Activated naive CD8-positive, alpha-beta T cell treated with anti-CD3 and anti-CD28 coated beads, Interleukin-2, amount 10 ng/mL, durations not matched to agents 7 days and 5 days (primary cell): ENCODE measurements at regions of chr6 and their contacts with region 1.

Region 1: DNA sequence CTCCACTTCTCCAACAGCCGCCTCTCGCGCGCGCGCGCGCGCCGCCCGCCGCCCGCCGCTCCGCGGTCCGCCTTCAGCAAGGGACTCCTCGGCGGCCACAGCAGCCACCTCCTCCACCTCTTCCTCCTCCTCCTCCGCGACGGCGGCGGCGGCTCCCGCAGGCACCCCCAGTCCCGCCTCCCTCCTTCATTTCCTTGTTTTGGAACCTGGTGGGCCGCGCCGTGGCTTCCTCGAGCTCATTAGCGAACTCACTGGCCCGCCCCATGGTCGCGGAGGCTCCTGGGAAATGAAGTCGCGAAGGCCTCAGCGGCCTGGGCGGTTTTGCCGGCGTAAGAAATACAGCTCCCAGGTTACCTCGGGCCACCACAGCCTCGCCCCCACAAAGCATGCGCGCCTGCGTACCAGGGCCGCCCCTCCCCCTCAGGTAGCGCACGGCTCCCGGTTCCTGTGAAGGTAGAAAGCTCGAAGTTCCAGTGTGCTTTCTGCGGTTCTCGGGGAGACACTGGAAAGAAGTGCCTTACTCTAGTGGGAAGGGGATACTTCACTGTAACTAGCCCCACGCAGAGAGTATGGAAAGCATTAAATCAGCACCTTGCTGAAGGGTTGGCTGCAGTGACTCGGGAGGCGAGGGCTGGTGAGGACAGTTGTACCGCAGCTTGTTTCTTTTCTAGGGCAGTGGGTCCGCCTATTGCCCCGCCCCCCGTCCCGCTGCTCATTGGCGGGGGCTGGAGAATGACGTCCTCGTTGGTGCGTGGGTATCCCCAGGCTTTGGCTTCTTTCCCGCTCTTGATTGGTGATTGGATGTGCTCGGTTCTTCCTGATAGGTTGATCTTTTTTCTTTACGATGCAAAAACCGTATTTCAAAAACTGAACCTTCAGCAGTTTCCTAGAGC is at the start of gene CDK19:
- DNase-seq: peak; percentile 96
- ATAC-seq: peak; percentile 84
- H3K4me3 Mint-ChIP-seq: peak within 1 kb of the TSS; percentile 100
- H3K27ac Mint-ChIP-seq: peak within 1 kb of the TSS; percentile 100
- H3K4me1 Mint-ChIP-seq: peaks cover 32% of the 10 kb centered on the region
- H3K27me3 Mint-ChIP-seq: no peaks in the 10 kb centered on the region
- total RNA-seq, gene CDK19: 25.3 to 30.0 TPM

Region 2: GRCh38 chr6:110682460-110682853 is 133.0 kb before region 1 on chr6:
- POLR2A ChIA-PET with region 1: interaction called, 23 read pairs
- DNase-seq: no peak
- ATAC-seq: peak; percentile 99
- H3K4me3 Mint-ChIP-seq: no peak overlapping the region
- H3K27ac Mint-ChIP-seq: peak overlapping the region; percentile 27
- H3K4me1 Mint-ChIP-seq: peaks cover 9% of the 10 kb centered on the region
- H3K27me3 Mint-ChIP-seq: no peaks in the 10 kb centered on the region

Region 3: GRCh38 chr6:110826236-110827129 is 11.0 kb after region 1 on chr6:
- POLR2A ChIA-PET with region 1: interaction called, 13 read pairs
- DNase-seq: no peak
- ATAC-seq: no peak
- H3K4me3 Mint-ChIP-seq: no peak overlapping the region
- H3K27ac Mint-ChIP-seq: no peak overlapping the region
- H3K4me1 Mint-ChIP-seq: peaks cover 8% of the 10 kb centered on the region
- H3K27me3 Mint-ChIP-seq: peaks cover 10% of the 10 kb centered on the region

Region 4: GRCh38 chr6:110864824-110865223 is 49.4 kb after region 1 on chr6:
- POLR2A ChIA-PET with region 1: interaction called, 23 read pairs
- DNase-seq: no peak
- ATAC-seq: no peak
- H3K4me3 Mint-ChIP-seq: no peak overlapping the region
- H3K27ac Mint-ChIP-seq: no peak overlapping the region
- H3K4me1 Mint-ChIP-seq: peaks cover 4% of the 10 kb centered on the region
- H3K27me3 Mint-ChIP-seq: no peaks in the 10 kb centered on the region

Region 5: GRCh38 chr6:110933912-110934311 is 118.4 kb after region 1 on chr6:
- POLR2A ChIA-PET with region 1: no interaction called
- DNase-seq: no peak
- ATAC-seq: no peak
- H3K4me3 Mint-ChIP-seq: no peak overlapping the region
- H3K27ac Mint-ChIP-seq: no peak overlapping the region
- H3K4me1 Mint-ChIP-seq: peaks cover 6% of the 10 kb centered on the region
- H3K27me3 Mint-ChIP-seq: no peaks in the 10 kb centered on the region

Region 6: GRCh38 chr6:110958329-110959192 is 143.1 kb after region 1 on chr6 and contains the start of gene GTF3C6:
- POLR2A ChIA-PET with region 1: interaction called, 41 read pairs
- DNase-seq: peak; percentile 93
- ATAC-seq: peak; percentile 99
- H3K4me3 Mint-ChIP-seq: peak within 1 kb of the TSS; percentile 96
- H3K27ac Mint-ChIP-seq: peak within 1 kb of the TSS; percentile 98
- H3K4me1 Mint-ChIP-seq: peaks cover 10% of the 10 kb centered on the region
- H3K27me3 Mint-ChIP-seq: peaks cover 4% of the 10 kb centered on the region
- total RNA-seq, gene GTF3C6: 60.9 to 65.4 TPM

Region 7: DNA sequence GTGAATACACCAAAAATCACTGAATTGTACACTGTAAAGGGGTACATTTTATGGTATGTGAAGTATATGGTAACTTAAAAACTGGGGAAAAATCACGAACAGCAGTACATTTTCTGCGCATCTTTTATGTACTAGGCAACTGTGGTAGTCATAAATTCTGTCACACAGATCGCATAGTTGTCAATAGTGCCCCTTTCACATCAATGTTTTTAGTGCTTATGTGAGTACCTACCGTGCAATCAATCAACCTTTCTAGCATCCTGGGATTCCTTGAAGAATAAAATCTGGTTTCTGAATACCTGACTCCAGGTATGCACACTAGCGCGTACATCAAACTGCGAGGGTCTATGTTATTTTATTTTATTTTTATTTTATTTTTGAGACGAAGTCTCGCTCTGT is 165.7 kb after region 1 on chr6:
- POLR2A ChIA-PET with region 1: interaction called, 18 read pairs
- DNase-seq: no peak
- ATAC-seq: no peak
- H3K4me3 Mint-ChIP-seq: peak overlapping the region; percentile 97
- H3K27ac Mint-ChIP-seq: peak overlapping the region; percentile 99
- H3K4me1 Mint-ChIP-seq: peaks cover 24% of the 10 kb centered on the region
- H3K27me3 Mint-ChIP-seq: no peaks in the 10 kb centered on the region